Mammary epithelial cell (primary cell): ENCODE measurements at regions of chr2 and their contacts with region 1.

Region 1: DNA sequence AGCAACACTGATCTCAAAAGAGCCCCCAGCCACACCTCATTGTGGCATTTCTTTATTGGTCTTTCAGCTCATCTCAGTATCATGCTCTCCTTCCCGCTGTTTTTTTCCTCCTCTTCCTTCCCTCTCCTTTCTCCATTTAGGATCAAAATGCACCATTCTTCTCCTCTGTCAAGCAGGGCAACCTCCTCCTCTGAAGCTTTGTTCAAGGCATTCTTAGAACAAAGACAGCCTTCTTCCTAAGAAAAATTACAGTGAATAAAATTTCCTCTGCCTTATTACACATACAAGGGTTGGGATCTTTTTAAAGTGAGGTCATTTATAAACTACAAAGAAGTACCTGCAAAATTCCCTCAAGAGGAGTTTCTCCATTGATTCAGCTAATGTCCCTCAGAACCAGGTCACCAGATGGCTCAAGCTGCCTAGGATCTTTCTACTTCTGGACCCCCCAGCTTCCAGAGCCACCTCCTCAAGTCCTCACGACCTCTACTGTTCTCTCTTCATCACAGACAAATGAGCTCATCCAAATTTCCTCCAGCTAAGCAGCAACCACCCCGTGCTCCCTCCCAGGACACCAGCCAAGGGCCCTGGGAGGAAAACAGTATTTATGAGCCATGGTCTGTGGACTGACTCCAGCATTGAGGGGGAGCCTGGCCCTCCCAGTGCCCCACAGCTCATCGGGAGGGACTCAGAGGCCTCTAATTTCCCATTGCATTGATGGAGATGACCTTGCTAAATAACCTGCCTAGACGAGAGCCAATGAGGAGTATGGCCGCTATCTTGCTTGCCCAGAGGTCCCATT is 18.0 kb downstream of the SFXN5 start:
- DNase-seq: no peak
- H3K4me3 ChIP-seq: no peak overlapping the region
- H3K27ac ChIP-seq: no peak overlapping the region
- H3K4me1 ChIP-seq: peaks cover 7% of the 10 kb centered on the region
- H3K27me3 ChIP-seq: no peaks in the 10 kb centered on the region
- CTCF ChIP-seq: no peak

Region 2: DNA sequence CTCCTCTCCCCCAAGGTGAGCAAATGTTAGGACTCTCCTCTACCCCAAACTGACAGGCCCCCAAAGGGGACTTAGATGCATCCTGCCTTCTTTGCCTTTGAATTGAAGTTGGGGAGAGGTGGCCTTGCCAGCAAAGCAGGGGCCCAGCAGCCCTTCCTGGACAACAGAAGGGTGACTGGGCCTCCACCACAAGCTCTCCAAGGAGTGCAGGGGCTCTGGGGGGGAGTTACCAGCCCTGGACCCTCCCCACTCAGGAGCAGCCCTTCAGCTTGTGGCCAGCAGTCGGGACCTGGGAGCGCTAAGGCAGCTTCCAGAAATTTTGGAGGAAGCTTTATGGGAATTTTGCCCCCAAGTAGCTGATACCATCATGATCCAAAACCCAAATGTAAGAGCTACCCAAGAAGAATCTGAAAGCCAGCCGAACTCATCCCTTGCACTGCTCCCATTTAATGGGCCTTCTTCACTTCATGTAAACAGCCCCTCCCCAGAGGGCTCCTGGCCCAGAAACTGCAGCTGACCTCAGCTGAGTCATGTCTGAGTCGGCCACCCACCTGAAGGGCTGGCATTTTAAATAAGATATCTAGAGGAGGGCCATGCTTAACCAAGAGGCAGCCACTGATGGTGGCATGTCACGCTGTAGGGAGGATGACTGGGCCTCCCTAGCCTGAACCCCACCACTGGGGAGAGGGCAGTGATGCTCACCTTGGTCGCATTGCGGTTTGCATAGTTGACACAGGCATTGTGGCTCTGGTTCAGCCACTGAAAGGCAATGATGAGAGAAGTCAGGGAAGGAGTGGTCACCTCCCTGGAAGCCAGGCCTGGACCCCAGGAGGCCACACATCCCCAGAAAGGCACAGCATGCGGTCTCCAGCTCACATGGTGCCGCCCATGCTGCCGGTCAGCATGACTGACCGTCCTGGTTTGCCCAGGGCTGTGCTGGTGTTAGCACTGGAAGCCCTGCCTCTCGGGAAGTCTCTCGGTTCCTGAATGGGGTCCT is 53.5 kb before region 1 on chr2:
- CTCF ChIA-PET with region 1: no interaction called
- dilution Hi-C with region 1: loop called (anchors 10 kb)
- in situ Hi-C with region 1: no loop called
- intact Hi-C with region 1: no loop called
- DNase-seq: peak; percentile 48
- H3K4me3 ChIP-seq: no peak overlapping the region
- H3K27ac ChIP-seq: no peak overlapping the region
- H3K4me1 ChIP-seq: peaks cover 7% of the 10 kb centered on the region
- H3K27me3 ChIP-seq: no peaks in the 10 kb centered on the region
- CTCF ChIP-seq: no peak

Region 3: GRCh38 chr2:73013936-73014335 is 39.6 kb before region 1 on chr2:
- CTCF ChIA-PET with region 1: no interaction called
- dilution Hi-C with region 1: loop called (anchors 10 kb)
- in situ Hi-C with region 1: no loop called
- intact Hi-C with region 1: loop called (anchors 5 kb)
- DNase-seq: no peak
- H3K4me3 ChIP-seq: no peak overlapping the region
- H3K27ac ChIP-seq: no peak overlapping the region
- H3K4me1 ChIP-seq: no peaks in the 10 kb centered on the region
- H3K27me3 ChIP-seq: no peaks in the 10 kb centered on the region
- CTCF ChIP-seq: no peak

Region 4: GRCh38 chr2:74052732-74053597 is 999.5 kb after region 1 on chr2:
- CTCF ChIA-PET with region 1: no interaction called
- dilution Hi-C with region 1: no loop called
- in situ Hi-C with region 1: no loop called
- intact Hi-C with region 1: no loop called
- DNase-seq: no peak
- H3K4me3 ChIP-seq: no peak overlapping the region
- H3K27ac ChIP-seq: no peak overlapping the region
- H3K4me1 ChIP-seq: no peaks in the 10 kb centered on the region
- H3K27me3 ChIP-seq: no peaks in the 10 kb centered on the region
- CTCF ChIP-seq: no peak